AG04449 (cell line): ENCODE measurements at regions of chr1 and their contacts with region 1.

Region 1: GRCh38 chr1:165367375-165367993 is 11.0 kb upstream of the LMX1A start:
- DNase-seq: no peak
- H3K4me3 ChIP-seq: no peak overlapping the region
- CTCF ChIP-seq: peak; percentile 94

Region 2: GRCh38 chr1:165114022-165114888 is 253.2 kb before region 1 on chr1:
- CTCF ChIA-PET with region 1: interaction called, 33 read pairs
- POLR2A ChIA-PET with region 1: no interaction called
- DNase-seq: no peak
- H3K4me3 ChIP-seq: no peak overlapping the region
- CTCF ChIP-seq: peak; percentile 58

Region 3: GRCh38 chr1:165352442-165353293 is 14.8 kb before region 1 on chr1:
- CTCF ChIA-PET with region 1: interaction called, 12 read pairs
- POLR2A ChIA-PET with region 1: no interaction called
- DNase-seq: no peak
- H3K4me3 ChIP-seq: no peak overlapping the region
- CTCF ChIP-seq: no peak

Region 4: GRCh38 chr1:165383067-165383466 is 15.6 kb after region 1 on chr1:
- CTCF ChIA-PET with region 1: interaction called, 54 read pairs
- POLR2A ChIA-PET with region 1: no interaction called
- DNase-seq: no peak
- H3K4me3 ChIP-seq: no peak overlapping the region
- CTCF ChIP-seq: no peak

Region 5: DNA sequence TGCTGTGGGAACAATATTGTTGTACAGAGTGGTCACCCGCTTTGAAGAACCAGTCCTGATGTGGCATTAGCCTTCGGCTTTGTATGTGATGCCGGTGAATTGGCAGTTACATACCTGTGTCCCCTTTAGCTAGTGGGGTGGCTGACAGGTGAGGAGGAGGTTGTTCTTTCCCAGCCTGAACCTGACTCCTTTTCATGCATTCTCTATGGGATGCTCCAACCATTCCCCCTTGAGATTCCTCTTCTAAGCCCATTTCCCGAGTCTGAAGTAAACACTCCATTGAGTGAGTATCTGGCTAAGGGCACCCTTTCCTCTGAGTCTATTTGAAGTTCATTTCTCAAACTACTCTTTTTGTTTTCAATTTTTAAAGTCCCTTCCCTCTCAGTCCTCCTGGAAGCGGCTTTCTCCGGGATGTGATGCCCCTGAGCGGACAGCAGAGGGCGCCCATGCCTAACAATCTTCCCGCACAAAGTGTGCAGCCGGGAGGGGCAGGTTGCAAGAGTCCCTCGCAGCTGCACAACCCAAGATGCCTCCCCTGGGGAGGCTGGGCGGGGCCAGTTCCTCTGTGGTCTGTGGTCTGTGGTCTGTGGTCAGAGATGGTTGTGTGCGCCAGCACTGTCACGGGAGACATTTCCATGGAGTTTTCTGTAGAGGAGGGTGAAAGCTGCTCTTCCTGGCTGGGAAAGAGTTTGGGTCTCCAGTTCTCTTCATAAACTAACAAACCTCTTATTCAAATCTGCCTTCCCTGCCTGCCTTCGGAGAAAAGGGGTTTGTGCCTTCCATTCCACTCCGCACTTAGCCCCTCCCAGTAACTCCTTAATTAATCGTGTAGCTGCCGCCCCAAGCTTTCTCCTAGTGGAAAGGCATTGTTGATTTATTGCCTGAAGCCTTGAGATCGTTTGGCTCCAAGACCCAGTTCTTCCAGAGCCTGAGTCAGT is 25.4 kb after region 1 on chr1:
- CTCF ChIA-PET with region 1: interaction called, 16 read pairs
- POLR2A ChIA-PET with region 1: no interaction called
- DNase-seq: peak; percentile 62
- H3K4me3 ChIP-seq: no peak overlapping the region
- CTCF ChIP-seq: peak; percentile 90

Region 6: GRCh38 chr1:165463978-165464377 is 96.5 kb after region 1 on chr1:
- CTCF ChIA-PET with region 1: no interaction called
- POLR2A ChIA-PET with region 1: no interaction called
- DNase-seq: no peak
- H3K4me3 ChIP-seq: no peak overlapping the region
- CTCF ChIP-seq: no peak

Region 7: GRCh38 chr1:165531021-165531420 is 163.5 kb after region 1 on chr1:
- CTCF ChIA-PET with region 1: no interaction called
- POLR2A ChIA-PET with region 1: no interaction called
- DNase-seq: no peak
- H3K4me3 ChIP-seq: no peak overlapping the region
- CTCF ChIP-seq: no peak

Region 8: DNA sequence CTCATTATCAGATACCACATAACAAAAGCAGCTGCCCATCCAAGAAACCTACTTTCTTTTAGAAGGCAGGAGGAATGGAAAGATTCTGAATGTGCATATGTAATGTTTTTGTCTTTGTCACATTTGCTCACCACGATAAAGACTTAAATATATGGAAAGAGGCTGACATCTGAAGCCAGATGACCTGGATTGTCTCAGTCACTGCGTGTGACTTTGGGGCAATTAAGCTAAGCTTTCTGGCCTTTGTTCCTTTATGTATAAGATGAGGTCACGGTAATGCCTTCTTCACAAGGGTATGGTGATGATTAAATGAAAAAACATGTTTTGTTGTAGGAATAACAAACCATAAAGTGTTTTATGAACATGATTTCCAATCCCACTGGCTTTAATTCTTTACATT is 219.0 kb after region 1 on chr1:
- CTCF ChIA-PET with region 1: interaction called, 69 read pairs
- POLR2A ChIA-PET with region 1: no interaction called
- DNase-seq: no peak
- H3K4me3 ChIP-seq: no peak overlapping the region
- CTCF ChIP-seq: no peak